WTC11 (cell line): ENCODE measurements at regions of chr15 and their contacts with region 1.

Region 1: DNA sequence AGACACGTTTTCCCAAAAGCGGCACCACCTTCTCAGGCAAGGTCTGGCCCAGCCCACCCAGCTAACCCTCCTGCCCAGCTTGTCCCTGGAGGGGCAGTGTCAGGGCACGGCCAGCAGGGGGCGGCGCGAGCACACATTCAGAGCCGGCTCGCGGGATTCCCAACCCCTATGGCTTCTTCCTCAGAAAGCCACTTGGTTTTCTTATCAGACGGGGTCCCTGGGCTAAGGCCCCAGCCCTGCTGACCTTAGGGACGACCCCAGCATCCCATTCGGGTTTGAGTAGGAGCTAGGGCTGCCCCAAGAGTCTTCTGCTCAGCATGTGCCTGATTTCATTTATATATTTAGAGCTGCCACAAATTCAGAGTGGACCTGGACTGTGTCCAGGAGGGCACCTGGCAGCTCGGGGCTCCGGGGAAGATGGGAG is 14.5 kb downstream of the RLBP1 start:
- DNase-seq: peak; percentile 90
- ATAC-seq: peak; percentile 98
- H3K4me3 Mint-ChIP-seq: no peak overlapping the region
- H3K27ac Mint-ChIP-seq: no peak overlapping the region
- H3K4me1 Mint-ChIP-seq: peaks cover 10% of the 10 kb centered on the region
- H3K27me3 Mint-ChIP-seq: no peaks in the 10 kb centered on the region; the same call in 1 of the 2 replicates
- CTCF ChIP-seq: peak; percentile 98

Region 2: GRCh38 chr15:88878720-88879184 is 328.2 kb before region 1 on chr15:
- CTCF ChIA-PET with region 1: interaction called, 10 read pairs
- POLR2A ChIA-PET with region 1: no interaction called
- DNase-seq: peak; percentile 86
- ATAC-seq: peak; percentile 92
- H3K4me3 Mint-ChIP-seq: no peak overlapping the region
- H3K27ac Mint-ChIP-seq: peak overlapping the region; percentile 85; the same call in 1 of the 2 replicates
- H3K4me1 Mint-ChIP-seq: peaks cover 14% of the 10 kb centered on the region
- H3K27me3 Mint-ChIP-seq: no peaks in the 10 kb centered on the region
- CTCF ChIP-seq: peak; percentile 60

Region 3: DNA sequence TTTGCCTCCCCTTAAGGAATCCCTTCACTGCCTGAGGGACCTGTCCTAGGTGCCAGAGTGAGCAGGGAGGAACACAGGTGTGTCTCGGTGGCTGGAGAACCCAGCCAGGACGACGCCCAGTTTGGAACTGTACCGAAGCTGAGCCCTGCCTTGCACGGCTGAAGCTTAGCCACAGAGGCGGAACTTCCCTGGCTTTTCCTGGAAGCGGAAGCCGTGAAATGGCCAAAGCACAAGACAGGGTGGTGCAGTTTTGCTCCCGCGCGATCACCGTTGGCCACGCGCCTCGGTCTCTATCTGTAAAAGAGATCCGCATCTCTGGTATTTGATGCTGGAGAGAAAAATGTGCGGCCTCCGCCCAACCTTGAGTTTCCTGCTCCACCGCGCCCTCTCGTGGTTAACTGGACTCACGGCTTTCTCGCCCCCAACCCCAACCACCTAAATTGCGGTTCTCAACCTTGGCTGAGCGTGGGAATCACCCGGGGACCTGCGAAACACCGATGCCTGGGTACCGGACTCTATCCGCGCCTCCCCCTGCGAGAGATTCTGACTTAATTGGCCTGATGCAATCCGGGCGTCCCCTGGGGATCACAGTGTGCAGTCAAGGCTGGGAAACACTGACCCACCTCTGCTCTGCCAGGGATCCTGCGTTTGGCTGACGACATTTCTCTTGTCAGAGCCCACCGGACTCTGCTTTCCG is 189.4 kb before region 1 on chr15:
- CTCF ChIA-PET with region 1: no interaction called
- POLR2A ChIA-PET with region 1: no interaction called
- DNase-seq: peak; percentile 96
- ATAC-seq: peak; percentile 91
- H3K4me3 Mint-ChIP-seq: peak overlapping the region; percentile 51
- H3K27ac Mint-ChIP-seq: peak overlapping the region; percentile 38; the same call in 1 of the 2 replicates
- H3K4me1 Mint-ChIP-seq: peaks cover 30% of the 10 kb centered on the region
- H3K27me3 Mint-ChIP-seq: peaks cover 21% of the 10 kb centered on the region
- CTCF ChIP-seq: peak; percentile 73

Region 4: DNA sequence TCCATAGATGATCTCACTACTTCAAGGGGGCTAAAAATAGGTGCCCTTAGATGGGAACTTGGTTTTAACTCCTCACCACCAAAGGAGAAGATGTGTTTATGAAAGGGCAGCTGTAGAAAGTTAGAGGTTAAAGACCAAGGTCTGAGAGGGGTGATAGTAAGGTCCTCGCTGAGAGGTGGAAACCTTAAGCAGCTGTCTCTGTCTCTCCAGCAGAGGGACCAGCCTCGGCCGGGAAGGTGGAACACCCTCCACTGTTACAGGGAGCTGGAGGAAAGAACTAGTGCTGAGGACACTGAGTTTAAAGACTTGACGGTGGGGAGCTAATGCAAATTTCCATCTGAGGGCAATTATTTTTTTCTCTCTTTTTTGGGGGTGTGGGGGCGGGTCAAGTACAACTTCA is 23.4 kb after region 1 on chr15:
- CTCF ChIA-PET with region 1: interaction called, 22 read pairs
- POLR2A ChIA-PET with region 1: no interaction called
- DNase-seq: no peak
- ATAC-seq: peak; percentile 79
- H3K4me3 Mint-ChIP-seq: no peak overlapping the region
- H3K27ac Mint-ChIP-seq: no peak overlapping the region
- H3K4me1 Mint-ChIP-seq: no peaks in the 10 kb centered on the region; the same call in 1 of the 2 replicates
- H3K27me3 Mint-ChIP-seq: peaks cover 9% of the 10 kb centered on the region
- CTCF ChIP-seq: no peak

Region 5: GRCh38 chr15:89278307-89278706 is 71.4 kb after region 1 on chr15:
- CTCF ChIA-PET with region 1: interaction called, 11 read pairs
- POLR2A ChIA-PET with region 1: no interaction called
- DNase-seq: no peak
- ATAC-seq: no peak
- H3K4me3 Mint-ChIP-seq: no peak overlapping the region
- H3K27ac Mint-ChIP-seq: no peak overlapping the region
- H3K4me1 Mint-ChIP-seq: no peaks in the 10 kb centered on the region
- H3K27me3 Mint-ChIP-seq: no peaks in the 10 kb centered on the region
- CTCF ChIP-seq: no peak

Region 6: GRCh38 chr15:89334510-89335288 is 127.8 kb after region 1 on chr15 and contains the start of gene POLG:
- CTCF ChIA-PET with region 1: interaction called, 12 read pairs
- POLR2A ChIA-PET with region 1: no interaction called
- DNase-seq: peak; percentile 99
- ATAC-seq: peak; percentile 87
- H3K4me3 Mint-ChIP-seq: peak within 1 kb of the TSS; percentile 95
- H3K27ac Mint-ChIP-seq: peak within 1 kb of the TSS; percentile 76
- H3K4me1 Mint-ChIP-seq: peaks cover 18% of the 10 kb centered on the region
- H3K27me3 Mint-ChIP-seq: peaks cover 7% of the 10 kb centered on the region; the same call in 1 of the 2 replicates
- CTCF ChIP-seq: no peak
- total RNA-seq, gene POLG: 63.9 to 76.2 TPM (median 68.3 TPM) in 3 replicates